Calu3 (cell line): ENCODE measurements at regions of chr17 and their contacts with region 1.

Region 1: DNA sequence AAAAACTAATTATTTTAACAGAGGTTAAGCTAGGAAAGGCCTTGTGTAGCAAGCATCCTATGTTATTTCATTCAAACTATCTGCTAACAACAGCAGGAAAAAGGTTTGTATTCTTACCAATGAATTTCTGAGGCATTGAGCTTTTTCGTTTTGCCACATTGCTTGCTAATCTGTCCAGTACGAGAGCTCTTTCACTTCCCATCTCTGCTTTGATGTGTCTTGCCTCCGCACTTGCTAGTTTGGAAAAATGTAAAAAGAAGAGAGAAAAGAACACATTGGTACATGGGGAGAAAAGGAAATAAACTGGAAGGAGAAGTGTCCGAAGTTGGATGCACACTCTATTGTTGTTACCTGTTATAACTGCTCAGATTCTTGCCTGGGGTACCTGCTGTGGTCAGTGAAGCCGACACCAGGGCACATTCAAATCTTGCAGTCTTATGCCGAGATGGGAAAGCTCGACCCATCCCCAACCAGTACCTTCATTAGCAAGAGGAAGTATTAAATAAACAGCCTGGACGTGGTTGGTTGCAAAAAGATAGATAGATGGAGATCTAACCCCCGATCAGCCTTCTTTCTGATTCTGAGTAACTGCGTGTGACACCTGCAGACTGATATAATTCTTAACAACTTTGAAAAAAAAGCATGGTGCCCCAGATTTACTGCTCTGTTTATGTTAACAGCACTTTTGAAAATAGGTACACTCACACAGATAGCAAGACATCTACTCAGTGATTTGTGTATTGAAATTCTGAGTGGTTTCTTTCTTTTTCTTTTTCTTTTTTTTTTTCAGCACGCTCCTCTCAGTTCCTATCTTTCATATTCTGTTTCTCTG is 40.0 kb downstream of the GRB7 start:
- DNase-seq: no peak
- H3K4me3 Mint-ChIP-seq: no peak overlapping the region
- H3K27ac Mint-ChIP-seq: no peak overlapping the region
- H3K4me1 Mint-ChIP-seq: peaks cover 48% of the 10 kb centered on the region
- H3K27me3 Mint-ChIP-seq: no peaks in the 10 kb centered on the region
- CTCF ChIP-seq: no peak

Region 2: GRCh38 chr17:39294060-39294459 is 483.7 kb before region 1 on chr17:
- CTCF ChIA-PET with region 1: no interaction called
- intact Hi-C with region 1: no loop called
- DNase-seq: no peak
- H3K4me3 Mint-ChIP-seq: no peak overlapping the region
- H3K27ac Mint-ChIP-seq: no peak overlapping the region
- H3K4me1 Mint-ChIP-seq: no peaks in the 10 kb centered on the region
- H3K27me3 Mint-ChIP-seq: no peaks in the 10 kb centered on the region
- CTCF ChIP-seq: no peak

Region 3: GRCh38 chr17:39335704-39336223 is 442.0 kb before region 1 on chr17:
- CTCF ChIA-PET with region 1: no interaction called
- intact Hi-C with region 1: no loop called
- DNase-seq: no peak
- H3K4me3 Mint-ChIP-seq: no peak overlapping the region
- H3K27ac Mint-ChIP-seq: no peak overlapping the region
- H3K4me1 Mint-ChIP-seq: no peaks in the 10 kb centered on the region
- H3K27me3 Mint-ChIP-seq: no peaks in the 10 kb centered on the region
- CTCF ChIP-seq: no peak

Region 4: GRCh38 chr17:39636927-39637736 is 140.6 kb before region 1 on chr17 and contains the start of gene STARD3:
- CTCF ChIA-PET with region 1: interaction called, 1,121 read pairs
- intact Hi-C with region 1: loop called (anchors 1 kb)
- DNase-seq: no peak
- H3K4me3 Mint-ChIP-seq: peak within 1 kb of the TSS; percentile 71
- H3K27ac Mint-ChIP-seq: peak within 1 kb of the TSS; percentile 28
- H3K4me1 Mint-ChIP-seq: peaks cover 61% of the 10 kb centered on the region
- H3K27me3 Mint-ChIP-seq: peaks cover 5% of the 10 kb centered on the region
- CTCF ChIP-seq: no peak
- total RNA-seq, gene STARD3: 2,579 and 2,697 TPM in 2 replicates

Region 5: DNA sequence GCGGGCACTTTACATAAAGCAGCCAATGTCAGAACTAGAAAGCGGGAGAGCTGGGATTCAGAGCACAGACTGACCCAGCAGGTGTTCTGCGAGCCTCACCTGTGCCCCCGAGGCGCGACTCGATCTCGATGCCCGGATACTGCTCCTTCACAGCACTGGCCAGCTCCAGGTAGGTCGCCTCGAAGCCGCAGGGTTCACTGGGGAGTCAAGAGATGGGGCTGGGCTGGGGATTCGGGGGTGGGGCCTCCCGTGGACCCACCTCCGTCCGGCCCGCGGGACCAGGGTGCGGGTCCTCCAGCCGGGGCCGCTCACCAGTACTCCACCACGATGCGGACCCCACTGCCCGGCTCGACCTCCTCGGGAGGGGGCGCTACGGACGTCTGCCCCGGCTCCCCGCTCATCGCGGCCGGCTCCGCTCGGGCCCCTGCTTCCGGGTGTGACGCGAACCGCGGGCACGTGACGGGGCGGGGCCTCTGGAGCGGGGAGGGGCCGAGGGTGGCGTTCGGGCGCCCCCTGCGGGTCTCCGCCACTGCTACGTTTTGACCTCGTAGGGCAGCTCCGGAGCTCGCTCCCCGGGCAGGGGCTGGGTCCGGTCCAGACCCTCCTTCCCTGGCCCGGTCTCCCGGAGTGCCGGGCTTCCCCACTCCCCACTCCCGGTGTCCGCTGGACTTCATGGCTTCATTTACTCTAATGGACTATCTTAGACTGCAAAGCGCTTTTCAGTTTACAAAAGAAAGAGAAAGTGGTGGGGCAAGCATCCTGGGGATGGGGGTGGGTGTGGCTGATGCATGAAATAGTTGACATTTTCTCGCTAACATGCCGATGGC is 47.4 kb before region 1 on chr17 and contains the start of gene MIEN1:
- CTCF ChIA-PET with region 1: interaction called, 34,714 read pairs
- intact Hi-C with region 1: loop called (anchors 1 kb)
- DNase-seq: no peak
- H3K4me3 Mint-ChIP-seq: peak within 1 kb of the TSS; percentile 79
- H3K27ac Mint-ChIP-seq: peak within 1 kb of the TSS; percentile 90
- H3K4me1 Mint-ChIP-seq: peaks cover 34% of the 10 kb centered on the region
- H3K27me3 Mint-ChIP-seq: no peaks in the 10 kb centered on the region
- CTCF ChIP-seq: no peak
- total RNA-seq, gene MIEN1: 2,121 and 2,217 TPM in 2 replicates

Region 6: GRCh38 chr17:39808409-39808997 is 30.8 kb after region 1 on chr17:
- CTCF ChIA-PET with region 1: interaction called, 881 read pairs
- intact Hi-C with region 1: loop called (anchors 1 kb)
- DNase-seq: peak; percentile 98
- H3K4me3 Mint-ChIP-seq: peak overlapping the region; percentile 1
- H3K27ac Mint-ChIP-seq: peak overlapping the region; percentile 16
- H3K4me1 Mint-ChIP-seq: peaks cover 37% of the 10 kb centered on the region
- H3K27me3 Mint-ChIP-seq: no peaks in the 10 kb centered on the region
- CTCF ChIP-seq: no peak

Region 7: DNA sequence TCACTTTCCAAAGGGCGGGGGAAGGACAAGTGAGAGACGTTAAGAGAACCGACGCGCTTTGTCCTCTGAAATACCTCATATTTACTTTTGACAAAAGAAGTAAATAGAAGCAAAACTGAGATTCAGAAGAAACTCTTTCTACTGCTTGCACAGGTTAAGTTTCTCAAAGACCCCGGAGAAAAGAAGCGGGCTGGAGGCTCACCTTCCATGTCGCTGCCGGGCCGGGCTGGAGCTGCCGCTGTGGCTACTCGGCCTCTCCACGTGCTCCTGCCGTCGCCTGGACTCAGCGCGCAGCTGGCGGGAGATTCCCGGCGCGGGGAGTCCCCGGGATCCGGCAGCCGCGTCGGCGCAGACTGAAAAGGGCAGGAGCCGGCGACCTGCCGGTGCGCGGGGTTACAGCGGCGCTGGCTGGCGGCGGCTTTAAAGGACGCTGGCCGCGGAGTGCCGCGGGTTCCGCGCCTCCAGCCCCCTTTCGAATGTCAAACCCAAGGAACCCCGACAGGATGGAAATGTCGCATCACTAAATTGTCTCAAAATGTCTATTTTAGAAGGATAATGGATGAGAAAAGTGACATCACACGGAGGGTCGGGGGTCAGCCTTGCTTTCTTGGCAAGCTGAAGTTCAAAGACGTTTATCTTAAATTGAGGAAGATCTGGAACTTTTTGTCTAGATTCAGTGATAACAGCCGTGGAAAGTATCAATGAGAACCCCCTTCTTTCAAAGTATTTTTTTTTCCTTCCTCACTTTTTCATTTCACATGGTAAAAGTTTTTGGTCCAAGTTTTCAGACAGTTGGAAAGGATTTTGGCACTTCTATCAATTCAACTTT is 86.4 kb after region 1 on chr17 and contains the start of gene IKZF3:
- CTCF ChIA-PET with region 1: interaction called, 375 read pairs
- intact Hi-C with region 1: loop called (anchors 1 kb)
- DNase-seq: peak; percentile 100
- H3K4me3 Mint-ChIP-seq: peak within 1 kb of the TSS; percentile 67
- H3K27ac Mint-ChIP-seq: peak within 1 kb of the TSS; percentile 31
- H3K4me1 Mint-ChIP-seq: peaks cover 38% of the 10 kb centered on the region
- H3K27me3 Mint-ChIP-seq: peaks cover 53% of the 10 kb centered on the region
- CTCF ChIP-seq: no peak
- total RNA-seq, gene IKZF3: 30.9 and 41.0 TPM in 2 replicates

Region 8: GRCh38 chr17:39946551-39947330 is 169.0 kb after region 1 on chr17:
- CTCF ChIA-PET with region 1: interaction called, 171 read pairs
- intact Hi-C with region 1: loop called (anchors 1 kb)
- DNase-seq: peak; percentile 86
- H3K4me3 Mint-ChIP-seq: no peak overlapping the region
- H3K27ac Mint-ChIP-seq: no peak overlapping the region
- H3K4me1 Mint-ChIP-seq: peaks cover 39% of the 10 kb centered on the region
- H3K27me3 Mint-ChIP-seq: peaks cover 57% of the 10 kb centered on the region
- CTCF ChIP-seq: no peak

Region 9: DNA sequence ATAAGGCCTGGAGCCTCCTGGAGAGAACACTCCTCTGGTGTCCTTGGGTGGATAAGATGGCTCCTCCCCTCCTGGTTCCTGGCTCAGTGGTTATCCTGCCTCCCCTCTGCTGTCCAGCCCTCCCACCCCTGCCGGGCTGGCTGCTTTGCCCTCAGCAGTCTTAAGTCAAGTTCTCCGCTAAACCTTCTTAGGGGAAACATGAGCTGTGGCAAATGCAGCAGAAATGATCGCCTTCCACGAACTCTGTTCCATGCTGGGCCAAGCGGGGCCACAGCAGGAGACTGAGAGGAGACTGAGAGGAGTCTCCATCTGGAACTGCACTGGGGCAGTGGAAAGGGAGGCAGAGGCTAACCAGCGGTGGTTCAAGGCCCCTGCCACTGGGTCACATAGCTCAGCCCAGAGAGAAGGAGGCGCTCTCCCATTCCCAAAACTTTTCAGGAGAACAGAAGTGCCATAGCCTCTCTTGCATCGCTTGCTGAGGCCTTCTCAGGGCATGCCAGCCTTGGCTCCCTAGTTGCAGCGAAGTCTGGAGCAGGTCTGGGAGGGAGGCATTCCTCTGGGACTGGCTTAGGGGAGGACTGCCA is 696.8 kb after region 1 on chr17:
- CTCF ChIA-PET with region 1: interaction called, 17 read pairs
- intact Hi-C with region 1: no loop called
- DNase-seq: no peak
- H3K4me3 Mint-ChIP-seq: no peak overlapping the region
- H3K27ac Mint-ChIP-seq: no peak overlapping the region
- H3K4me1 Mint-ChIP-seq: no peaks in the 10 kb centered on the region
- H3K27me3 Mint-ChIP-seq: peaks cover 65% of the 10 kb centered on the region
- CTCF ChIP-seq: no peak